Dorsolateral prefrontal cortex (tissue), 120 donors: ENCODE measurements at regions of chr1 and their contacts with region 1.

Region 1: GRCh38 chr1:154324669-154325582 is at the start of gene ATP8B2:
- DNase-seq: peak; percentile 62 to 88 (median 72)
- H3K4me3 ChIP-seq: peak within 1 kb of the TSS; percentile 63 to 89 (median 77)
- H3K27ac ChIP-seq: peak within 1 kb of the TSS in 58 of 59 donors; percentile 74 to 96 (median 89)
- H3K27me3 ChIP-seq: no peaks in the 10 kb centered on the region
- CTCF ChIP-seq: peak; percentile 55 to 95 (median 88)
- total RNA-seq, gene ATP8B2: 28.2 to 80.0 (median 45.7) TPM

Region 2: DNA sequence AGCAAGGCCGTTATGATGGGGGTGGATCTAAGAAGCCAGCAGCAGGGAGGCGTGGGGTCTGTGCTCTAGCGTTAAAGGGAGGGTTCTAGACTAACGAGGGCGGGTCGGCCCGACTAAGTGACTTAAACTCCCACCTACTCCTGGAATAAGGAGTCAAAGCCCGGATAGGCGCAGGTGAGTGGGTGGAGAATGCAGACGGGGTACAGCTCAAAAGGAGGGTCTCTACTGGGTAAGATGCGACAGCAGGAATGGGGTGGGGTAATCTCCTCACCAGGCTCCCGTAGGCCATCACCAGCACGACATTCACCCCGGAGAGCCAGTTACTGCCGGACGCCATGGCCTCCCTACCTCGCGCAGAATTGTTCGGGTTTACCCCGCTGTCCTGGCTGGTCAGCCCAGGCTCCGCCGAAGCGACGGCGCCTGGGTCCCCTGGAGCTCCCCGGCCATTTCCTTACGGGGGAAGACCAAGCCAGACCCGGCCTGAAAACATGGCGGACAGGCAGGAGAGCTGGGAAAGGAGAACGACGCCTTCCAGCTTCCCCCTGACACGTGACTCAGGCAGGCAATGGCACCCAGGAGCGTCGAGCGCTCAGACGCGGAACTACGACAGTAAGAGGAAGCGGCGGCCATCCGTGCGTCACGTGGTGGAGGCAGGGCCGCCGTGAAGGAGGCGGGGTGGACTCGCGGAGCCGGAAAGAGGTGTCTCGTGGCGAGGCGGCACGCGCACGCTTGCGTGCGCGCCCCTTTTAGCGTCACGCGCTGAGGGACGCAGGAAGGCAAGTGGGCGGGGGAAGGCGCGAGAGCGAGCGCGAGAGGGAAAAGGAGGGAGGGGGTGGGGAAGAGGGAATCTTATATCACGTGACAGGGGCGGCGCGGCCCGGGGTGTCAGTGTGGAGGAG is 104.6 kb before region 1 on chr1 and contains the start of gene UBAP2L:
- intact Hi-C with region 1: loop called (anchors 2 to 10 kb)
- DNase-seq: peak; percentile 96 to 99 (median 98)
- H3K4me3 ChIP-seq: peak within 1 kb of the TSS; percentile 71 to 100 (median 93)
- H3K27ac ChIP-seq: peak within 1 kb of the TSS; percentile 91 to 100 (median 99)
- H3K27me3 ChIP-seq: no peaks in the 10 kb centered on the region
- CTCF ChIP-seq: peak in 15 of 56 donors; percentile 6 to 52 (median 16)
- total RNA-seq, gene UBAP2L: 100 to 166 (median 130) TPM

Region 3: GRCh38 chr1:154474802-154475201 is 149.9 kb after region 1 on chr1:
- intact Hi-C with region 1: loop called (anchors 5 to 10 kb)
- DNase-seq: peak; percentile 33 to 94 (median 82)
- H3K4me3 ChIP-seq: no peak overlapping the region
- H3K27ac ChIP-seq: peak overlapping the region in 58 of 59 donors; percentile 37 to 93 (median 80)
- H3K27me3 ChIP-seq: no peaks in the 10 kb centered on the region
- CTCF ChIP-seq: peak in 4 of 56 donors; percentile 10 to 23 (median 16)

Region 4: DNA sequence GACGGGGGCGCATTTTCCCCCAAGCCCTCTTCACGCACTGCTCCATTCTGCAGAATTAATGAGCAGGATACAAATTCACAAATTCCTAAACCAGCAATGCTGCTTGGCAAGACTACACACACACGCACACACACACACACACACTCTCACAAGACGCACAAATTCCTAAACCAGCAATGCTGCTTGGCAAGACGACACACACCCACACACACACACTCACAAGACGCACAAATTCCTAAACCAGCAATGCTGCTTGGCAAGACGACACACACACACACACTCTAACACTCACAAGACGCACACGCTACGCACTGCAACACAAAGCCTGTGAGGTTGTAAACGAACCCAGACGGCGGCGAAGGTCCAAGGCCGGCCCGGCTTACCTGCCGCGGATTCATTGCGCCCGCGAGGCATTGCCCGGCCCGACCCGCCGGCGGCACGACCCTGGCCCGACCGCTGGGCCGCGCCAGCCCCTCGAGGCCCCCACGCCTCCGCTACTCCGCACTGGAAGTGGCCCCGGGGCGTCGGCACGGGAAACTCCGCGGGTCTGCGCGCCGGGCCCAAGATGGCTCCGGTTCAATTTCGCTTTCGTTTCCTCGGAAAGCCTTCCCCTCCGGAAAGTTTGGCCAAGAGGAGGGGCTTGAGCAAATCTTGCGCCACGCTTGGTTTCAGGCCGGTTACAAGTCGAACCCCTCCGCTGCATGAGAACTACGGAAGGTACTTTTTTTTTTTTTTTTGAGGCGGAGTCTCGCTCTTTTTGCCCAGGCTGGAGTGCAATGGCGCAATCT is 282.9 kb after region 1 on chr1 and contains the start of gene ADAR:
- intact Hi-C with region 1: no loop called
- DNase-seq: peak; percentile 55 to 82 (median 72)
- H3K4me3 ChIP-seq: peak within 1 kb of the TSS; percentile 60 to 94 (median 86)
- H3K27ac ChIP-seq: peak within 1 kb of the TSS; percentile 81 to 99 (median 95)
- H3K27me3 ChIP-seq: no peaks in the 10 kb centered on the region
- CTCF ChIP-seq: peak in 7 of 56 donors; percentile 2 to 12 (median 8)
- total RNA-seq, gene ADAR: 152 to 335 (median 225) TPM